ENCODE measurements at regions of chr16 and their contacts with region 1.

Region 1: GRCh38 chr16:88331989-88332920 is 50.5 kb upstream of the ZNF469 start:
- DNase-seq: peak; percentile 89
- H3K4me3 ChIP-seq: no peak overlapping the region
- H3K27ac ChIP-seq: peak overlapping the region; percentile 97
- H3K4me1 ChIP-seq: peaks cover 17% of the 10 kb centered on the region
- H3K27me3 ChIP-seq: no peaks in the 10 kb centered on the region
- CTCF ChIP-seq: no peak
- POLR2A ChIP-seq: no peak

Region 2: GRCh38 chr16:87950765-87951549 is 381.3 kb before region 1 on chr16 and contains the start of gene BANP:
- CTCF ChIA-PET with region 1: no interaction called
- POLR2A ChIA-PET with region 1: no interaction called
- dilution Hi-C with region 1: no loop called
- intact Hi-C with region 1: loop called (anchors 2 kb)
- DNase-seq: peak; percentile 98
- H3K4me3 ChIP-seq: peak within 1 kb of the TSS; percentile 68 to 81 (median 73)
- H3K27ac ChIP-seq: peak within 1 kb of the TSS; percentile 87
- H3K4me1 ChIP-seq: peaks cover 27% of the 10 kb centered on the region
- H3K27me3 ChIP-seq: no peaks in the 10 kb centered on the region
- CTCF ChIP-seq: peak; percentile 41 to 59
- POLR2A ChIP-seq: no peak
- total RNA-seq, gene BANP: 33.2 and 33.8 TPM in 2 replicates

Region 3: GRCh38 chr16:88298181-88298832 is 33.9 kb before region 1 on chr16:
- CTCF ChIA-PET with region 1: no interaction called
- POLR2A ChIA-PET with region 1: no interaction called
- dilution Hi-C with region 1: no loop called
- intact Hi-C with region 1: loop called (anchors 5 kb)
- DNase-seq: no peak
- H3K4me3 ChIP-seq: no peak overlapping the region
- H3K27ac ChIP-seq: no peak overlapping the region
- H3K4me1 ChIP-seq: no peaks in the 10 kb centered on the region
- H3K27me3 ChIP-seq: no peaks in the 10 kb centered on the region
- CTCF ChIP-seq: no peak
- POLR2A ChIP-seq: no peak

Region 4: DNA sequence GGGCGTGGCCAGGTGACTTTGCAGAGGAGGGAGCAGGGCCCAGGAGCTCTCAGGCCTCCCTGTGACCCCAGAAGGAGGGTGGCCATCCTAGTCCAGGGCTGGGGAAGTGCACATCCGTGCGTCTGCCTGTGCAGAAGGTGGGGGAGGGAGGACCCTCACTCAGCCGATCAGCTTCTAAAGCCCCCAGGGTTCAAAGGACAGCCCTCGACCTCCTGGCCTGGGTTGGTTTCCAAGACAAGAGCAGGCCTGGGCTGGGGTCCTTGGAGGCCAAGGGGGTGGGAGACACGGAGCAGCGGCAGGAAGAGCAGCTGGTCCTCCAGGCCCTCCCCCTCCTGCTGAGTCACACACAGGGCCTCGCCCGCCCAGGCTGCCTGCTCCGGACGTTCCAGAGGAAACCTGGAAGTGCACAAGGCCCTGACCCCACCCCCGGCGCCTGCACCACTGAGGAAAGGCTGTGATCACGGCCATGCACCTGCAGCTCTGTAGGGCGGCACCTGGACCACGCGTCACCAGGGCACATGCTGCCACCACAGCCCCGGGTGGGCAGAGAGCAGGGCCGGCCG is 16.6 kb before region 1 on chr16:
- CTCF ChIA-PET with region 1: no interaction called
- POLR2A ChIA-PET with region 1: no interaction called
- dilution Hi-C with region 1: no loop called
- intact Hi-C with region 1: loop called (anchors 1 kb)
- DNase-seq: peak; percentile 82
- H3K4me3 ChIP-seq: no peak overlapping the region
- H3K27ac ChIP-seq: peak overlapping the region; percentile 57
- H3K4me1 ChIP-seq: peaks cover 24% of the 10 kb centered on the region
- H3K27me3 ChIP-seq: no peaks in the 10 kb centered on the region
- CTCF ChIP-seq: no peak
- POLR2A ChIP-seq: no peak